WTC11 (cell line): ENCODE measurements at regions of chr9 and their contacts with region 1.

Region 1: DNA sequence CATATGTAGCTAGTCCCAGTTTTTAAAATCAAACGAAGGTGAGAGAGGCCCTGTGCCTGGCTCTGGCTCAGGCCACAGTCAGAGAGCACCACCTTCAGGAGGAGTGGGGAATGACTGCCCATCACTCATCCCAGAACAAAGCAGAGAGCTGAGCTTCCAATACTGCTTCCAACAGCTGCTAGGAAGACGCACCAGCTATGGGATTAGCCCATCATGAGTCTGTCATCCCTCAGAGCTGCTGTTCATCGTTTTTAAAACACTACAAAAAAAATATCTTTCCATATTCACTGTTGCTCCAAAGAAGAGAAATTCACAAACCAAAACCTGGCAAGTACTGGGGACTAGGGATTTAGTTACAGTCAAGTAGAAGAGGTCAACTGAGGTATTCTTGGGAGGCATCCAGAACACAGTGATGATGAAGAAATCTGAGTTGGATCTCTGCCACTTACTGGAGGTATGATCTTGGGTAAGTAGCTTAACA is 102.4 kb downstream of the CDK5RAP2 start:
- DNase-seq: peak; percentile 75
- ATAC-seq: peak; percentile 99
- H3K4me3 Mint-ChIP-seq: no peak overlapping the region
- H3K27ac Mint-ChIP-seq: no peak overlapping the region
- H3K4me1 Mint-ChIP-seq: peaks cover 8% of the 10 kb centered on the region; the same call in 1 of the 2 replicates
- H3K27me3 Mint-ChIP-seq: no peaks in the 10 kb centered on the region
- CTCF ChIP-seq: peak; percentile 72

Region 2: DNA sequence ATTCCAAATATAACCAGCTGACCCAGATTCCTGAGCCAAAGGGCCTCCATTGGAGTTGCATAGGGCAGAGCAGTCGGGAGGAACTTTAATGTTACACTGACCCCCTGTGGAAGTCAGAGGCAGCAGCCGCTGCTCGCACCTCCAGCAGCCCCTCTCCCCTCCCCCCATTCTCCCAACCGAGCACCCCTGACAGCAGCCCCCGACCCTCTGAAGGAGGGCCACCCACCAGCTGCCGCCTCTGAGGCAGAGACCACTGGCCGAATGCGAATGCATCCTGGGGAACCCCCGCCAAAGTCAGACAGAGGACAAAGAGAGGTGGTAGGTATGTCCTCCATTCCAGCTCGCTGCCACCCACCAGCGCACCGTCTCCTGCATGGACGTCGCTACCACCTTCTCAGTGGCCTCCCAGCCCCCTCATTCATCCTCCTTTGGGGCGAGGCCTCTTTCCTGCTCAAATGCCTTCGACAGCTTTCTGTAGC is 128.6 kb before region 1 on chr9:
- CTCF ChIA-PET with region 1: interaction called, 11 read pairs
- POLR2A ChIA-PET with region 1: no interaction called
- DNase-seq: peak; percentile 73
- ATAC-seq: peak; percentile 96
- H3K4me3 Mint-ChIP-seq: peak overlapping the region; percentile 33
- H3K27ac Mint-ChIP-seq: no peak overlapping the region
- H3K4me1 Mint-ChIP-seq: peaks cover 9% of the 10 kb centered on the region
- H3K27me3 Mint-ChIP-seq: no peaks in the 10 kb centered on the region; the same call in 1 of the 2 replicates
- CTCF ChIP-seq: peak; percentile 61

Region 3: DNA sequence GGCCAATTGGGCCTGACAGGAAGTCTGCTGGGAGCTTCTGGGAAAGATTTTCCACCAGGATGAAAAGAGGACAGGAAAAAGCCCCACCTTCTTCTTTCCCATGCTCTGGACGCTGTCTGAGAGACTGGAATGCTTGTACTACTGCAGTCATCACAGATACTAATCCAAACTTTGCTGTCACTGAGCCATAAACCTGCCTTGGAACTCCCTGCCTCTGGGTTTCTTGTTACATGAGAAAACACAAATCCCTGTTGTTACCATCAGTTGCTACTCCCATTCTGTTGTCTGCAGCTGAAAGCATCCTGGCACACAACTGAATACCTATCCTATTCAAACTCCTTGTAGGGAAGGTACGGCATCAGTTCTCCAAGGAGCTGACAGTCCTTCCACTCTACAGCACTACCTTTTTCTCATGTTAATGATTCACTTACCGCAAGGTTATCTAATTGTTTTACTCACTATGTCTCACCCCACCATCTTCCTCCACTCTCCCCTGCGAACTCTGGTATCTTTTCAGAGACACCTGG is 65.1 kb before region 1 on chr9:
- CTCF ChIA-PET with region 1: interaction called, 17 read pairs
- POLR2A ChIA-PET with region 1: no interaction called
- DNase-seq: no peak
- ATAC-seq: peak; percentile 76
- H3K4me3 Mint-ChIP-seq: peak overlapping the region; percentile 8; the same call in 1 of the 2 replicates
- H3K27ac Mint-ChIP-seq: peak overlapping the region; percentile 83
- H3K4me1 Mint-ChIP-seq: peaks cover 55% of the 10 kb centered on the region
- H3K27me3 Mint-ChIP-seq: no peaks in the 10 kb centered on the region
- CTCF ChIP-seq: no peak

Region 4: DNA sequence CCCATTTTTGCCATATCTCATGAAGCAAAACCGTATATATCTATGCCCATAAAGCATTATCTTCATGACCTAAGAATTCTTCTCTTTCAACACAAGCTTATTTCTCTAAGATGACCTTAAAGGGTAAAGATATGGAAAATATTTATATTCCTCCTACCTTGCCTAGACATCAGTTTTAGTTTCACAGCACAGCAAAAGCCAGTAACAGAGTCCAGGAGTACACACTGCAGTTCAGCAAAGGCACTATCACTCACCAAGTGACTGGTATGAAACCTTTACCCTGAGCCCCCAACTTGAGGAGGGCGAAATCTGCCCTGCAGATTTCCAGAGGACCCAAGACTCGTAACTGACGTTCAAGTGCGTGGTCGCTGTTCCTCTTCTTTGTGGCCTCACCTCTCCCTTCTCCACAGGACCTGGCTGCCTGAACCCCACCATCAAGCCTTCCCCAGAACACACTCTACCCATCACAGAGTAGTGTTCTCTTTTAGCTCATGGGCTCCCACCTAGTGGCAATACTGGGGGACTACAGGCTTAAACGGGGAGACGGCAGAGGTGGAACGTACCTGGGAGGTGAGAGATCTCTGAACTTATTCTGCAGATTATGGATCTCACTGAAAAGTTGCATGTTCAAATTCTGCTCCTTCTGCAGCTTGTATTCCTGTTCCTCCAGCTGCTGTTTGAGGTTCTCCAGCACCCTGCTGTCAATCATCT is 38.6 kb before region 1 on chr9:
- CTCF ChIA-PET with region 1: interaction called, 12 read pairs
- POLR2A ChIA-PET with region 1: no interaction called
- DNase-seq: peak; percentile 62
- ATAC-seq: peak; percentile 99
- H3K4me3 Mint-ChIP-seq: no peak overlapping the region
- H3K27ac Mint-ChIP-seq: no peak overlapping the region
- H3K4me1 Mint-ChIP-seq: no peaks in the 10 kb centered on the region
- H3K27me3 Mint-ChIP-seq: no peaks in the 10 kb centered on the region
- CTCF ChIP-seq: peak; percentile 67; the same call in 1 of the 2 replicates

Region 5: DNA sequence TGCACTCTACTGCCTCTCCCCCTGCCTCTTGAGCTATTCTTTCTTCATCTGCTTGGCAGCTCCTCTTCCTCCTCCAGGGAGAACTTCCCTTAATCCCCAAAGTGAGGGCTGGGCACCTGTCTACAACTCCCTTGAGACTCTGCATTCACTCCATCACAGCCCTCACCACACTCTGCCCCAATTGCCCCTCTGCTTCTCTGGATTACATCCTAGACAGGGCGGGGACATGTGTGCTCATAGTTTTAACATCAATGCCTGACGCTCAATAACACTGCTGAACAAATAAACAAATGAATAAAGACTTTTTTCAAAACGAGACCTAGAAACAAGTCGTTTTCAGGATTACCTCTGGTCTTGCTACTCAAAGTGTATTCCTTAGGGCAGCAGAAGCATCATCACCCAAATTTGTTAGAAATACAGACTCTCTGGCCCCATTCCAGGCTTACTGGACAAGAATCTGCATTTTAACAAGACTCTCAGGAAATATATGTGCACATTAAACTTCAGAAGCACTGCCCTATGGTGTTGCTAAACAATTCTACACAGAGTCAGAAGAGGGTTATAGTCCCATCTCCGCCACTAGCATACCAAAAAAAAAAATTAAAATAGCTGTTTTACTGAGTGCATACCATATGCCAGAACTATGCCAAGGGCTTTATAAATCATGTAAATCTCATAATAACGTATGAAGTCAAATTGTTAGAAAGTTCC is 13.2 kb before region 1 on chr9:
- CTCF ChIA-PET with region 1: interaction called, 18 read pairs
- POLR2A ChIA-PET with region 1: no interaction called
- DNase-seq: no peak
- ATAC-seq: no peak
- H3K4me3 Mint-ChIP-seq: no peak overlapping the region
- H3K27ac Mint-ChIP-seq: no peak overlapping the region
- H3K4me1 Mint-ChIP-seq: peaks cover 7% of the 10 kb centered on the region
- H3K27me3 Mint-ChIP-seq: no peaks in the 10 kb centered on the region
- CTCF ChIP-seq: no peak

Region 6: GRCh38 chr9:120500733-120501132 is 23.2 kb after region 1 on chr9:
- CTCF ChIA-PET with region 1: interaction called, 11 read pairs
- POLR2A ChIA-PET with region 1: no interaction called
- DNase-seq: no peak
- ATAC-seq: no peak
- H3K4me3 Mint-ChIP-seq: no peak overlapping the region
- H3K27ac Mint-ChIP-seq: no peak overlapping the region
- H3K4me1 Mint-ChIP-seq: peaks cover 7% of the 10 kb centered on the region
- H3K27me3 Mint-ChIP-seq: no peaks in the 10 kb centered on the region; the same call in 1 of the 2 replicates
- CTCF ChIP-seq: no peak

Region 7: GRCh38 chr9:120531683-120532300 is 54.2 kb after region 1 on chr9:
- CTCF ChIA-PET with region 1: interaction called, 38 read pairs
- POLR2A ChIA-PET with region 1: no interaction called
- DNase-seq: peak; percentile 33
- ATAC-seq: peak; percentile 76
- H3K4me3 Mint-ChIP-seq: no peak overlapping the region
- H3K27ac Mint-ChIP-seq: no peak overlapping the region
- H3K4me1 Mint-ChIP-seq: peaks cover 31% of the 10 kb centered on the region
- H3K27me3 Mint-ChIP-seq: no peaks in the 10 kb centered on the region
- CTCF ChIP-seq: no peak